Dendritic cell treated with granulocyte-macrophage colony-stimulating factor and Interleukin-4, amounts not matched to agents 40 ng/mL and 50 ng/mL, for 4 days (primary cell): ENCODE measurements at regions of chr21 and their contacts with region 1.

Region 1: GRCh38 chr21:36504067-36505058 is 24.4 kb upstream of the CLDN14 start:
- H3K4me3 Mint-ChIP-seq: no peak overlapping the region
- H3K27ac Mint-ChIP-seq: no peak overlapping the region
- H3K4me1 Mint-ChIP-seq: no peaks in the 10 kb centered on the region
- H3K27me3 Mint-ChIP-seq: peaks cover 5% of the 10 kb centered on the region

Region 2: DNA sequence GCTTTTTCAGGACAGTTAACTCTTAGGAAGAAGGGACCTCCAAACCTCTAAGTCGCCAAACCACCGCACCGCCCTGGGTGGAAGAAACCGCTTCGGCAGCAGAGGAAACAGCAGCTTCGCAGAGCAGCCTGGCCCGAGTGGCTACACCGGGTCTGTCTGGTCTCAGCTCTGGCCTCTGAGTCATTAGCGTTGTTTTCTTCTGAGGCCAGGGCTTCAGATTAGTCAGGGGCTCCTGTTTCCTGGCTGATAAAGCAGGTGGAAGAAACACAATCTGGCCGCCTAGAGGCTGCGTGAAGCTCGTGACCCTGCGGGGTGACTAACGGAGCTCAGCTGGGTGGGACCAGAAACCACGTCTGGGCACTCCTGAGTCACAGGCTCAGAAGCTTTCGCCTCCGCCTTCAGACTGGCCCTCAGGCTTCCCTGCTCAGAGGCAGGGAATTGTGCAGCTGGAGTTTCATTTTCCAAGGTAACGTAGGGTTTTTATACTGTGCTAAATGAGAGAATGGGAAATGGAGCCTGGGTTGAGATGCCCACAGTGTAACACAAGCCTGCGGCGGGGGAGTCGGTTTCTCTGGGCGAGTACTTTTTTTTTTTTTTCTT is 74.3 kb before region 1 on chr21:
- intact Hi-C with region 1: loop called (anchors 10 kb)
- H3K4me3 Mint-ChIP-seq: peak overlapping the region; percentile 69
- H3K27ac Mint-ChIP-seq: peak overlapping the region; percentile 85
- H3K4me1 Mint-ChIP-seq: peaks cover 46% of the 10 kb centered on the region
- H3K27me3 Mint-ChIP-seq: peaks cover 4% of the 10 kb centered on the region